ENCODE measurements at regions of chr18 and their contacts with region 1.

Region 1: DNA sequence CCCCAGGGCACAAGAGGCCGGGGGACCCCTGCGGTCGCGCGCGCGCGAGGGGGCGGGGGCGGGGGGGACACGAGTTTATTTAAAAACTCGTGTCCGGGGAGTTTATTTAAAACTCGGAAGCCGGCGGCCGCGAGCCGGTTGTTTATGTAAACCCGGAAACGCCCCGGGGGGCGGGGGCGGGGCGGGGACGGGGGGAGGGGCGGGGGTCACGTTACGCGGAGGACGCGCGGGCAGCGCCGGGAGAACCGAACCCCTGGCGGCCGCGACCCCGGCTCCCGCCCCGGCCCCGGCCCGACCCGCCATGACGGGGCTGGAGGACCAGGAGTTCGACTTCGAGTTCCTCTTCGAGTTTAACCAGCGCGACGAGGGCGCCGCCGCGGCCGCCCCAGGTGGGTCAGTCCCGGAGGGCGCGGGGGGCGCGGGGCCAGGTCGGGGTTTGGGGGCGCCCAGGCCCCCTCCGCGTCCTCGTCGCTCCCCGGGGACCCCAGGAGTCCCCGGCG is 4.4 kb downstream of the NFATC1 start:
- DNase-seq: peak; percentile 88
- CTCF ChIP-seq: no peak

Region 2: DNA sequence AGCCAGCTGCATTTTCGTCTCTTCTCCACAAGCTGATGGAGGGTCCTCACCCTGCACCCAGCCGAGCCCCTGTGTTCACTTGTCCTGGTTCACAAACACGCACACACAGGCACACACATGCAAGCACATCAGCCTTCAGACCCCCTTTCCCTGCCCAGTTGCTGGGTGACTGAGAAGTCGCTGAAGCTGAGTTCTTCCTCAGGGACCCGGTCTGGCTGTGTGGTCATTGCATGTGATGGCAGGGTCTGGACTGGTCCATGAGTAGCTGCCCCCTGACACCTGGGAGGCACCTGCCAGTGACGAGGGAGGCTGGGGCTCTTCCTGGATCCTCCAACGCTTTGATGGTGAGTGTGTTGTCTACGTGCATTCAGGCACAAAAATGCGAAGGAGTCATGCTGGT is 966.6 kb before region 1 on chr18:
- in situ Hi-C with region 1: no loop called
- DNase-seq: no peak
- CTCF ChIP-seq: no peak

Region 3: DNA sequence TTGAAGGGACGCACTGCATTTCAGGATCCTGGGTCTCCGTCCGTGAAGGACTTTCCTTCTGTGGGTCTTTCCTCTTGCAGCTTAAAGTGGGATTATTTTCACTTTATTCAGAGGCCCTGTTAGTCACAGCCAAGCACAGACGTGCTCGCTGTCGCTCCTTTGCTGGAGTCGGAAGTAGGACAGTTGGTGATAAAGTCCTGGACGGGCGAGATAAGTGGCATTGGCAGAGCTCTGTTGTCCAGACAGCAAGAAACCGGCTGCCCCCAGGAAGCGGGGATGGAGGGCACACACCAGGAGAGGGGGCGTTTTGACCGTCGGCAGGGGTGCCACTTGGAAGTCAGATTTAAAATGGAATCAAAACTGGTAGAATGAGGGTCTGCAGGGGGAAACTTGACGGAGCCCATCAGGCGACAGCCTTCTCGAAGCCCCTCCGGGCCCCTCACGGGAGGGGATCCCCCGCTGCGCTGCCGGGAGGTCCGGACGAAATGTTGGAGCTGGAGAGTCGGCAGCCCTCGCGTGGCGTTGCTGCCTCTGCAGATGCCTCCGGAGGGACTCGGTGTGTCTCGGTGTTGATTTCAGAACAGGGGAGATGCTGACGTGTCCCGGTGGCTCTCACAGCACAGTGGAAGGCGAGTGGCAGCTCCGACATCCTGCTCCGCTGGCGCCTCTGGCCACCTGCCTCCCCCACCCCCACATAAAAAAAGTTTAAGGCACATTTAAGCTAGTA is 119.8 kb after region 1 on chr18:
- in situ Hi-C with region 1: loop called (anchors 10 kb)
- DNase-seq: no peak
- CTCF ChIP-seq: no peak

Measured in GM13976 (cell line).